Naive thymus-derived CD4-positive, alpha-beta T cell (primary cell): ENCODE measurements at regions of chr1 and their contacts with region 1.

Region 1: GRCh38 chr1:193059268-193060225 is at the starts of genes RO60 and UCHL5:
- DNase-seq: peak; percentile 79 to 96 (median 94)
- ATAC-seq: peak; percentile 98
- H3K4me3 ChIP-seq: peak within 1 kb of the TSS; percentile 96
- H3K4me3 Mint-ChIP-seq: peak within 1 kb of the TSS; percentile 93 to 100 (median 98)
- H3K27ac ChIP-seq: peak within 1 kb of the TSS; percentile 89
- H3K27ac Mint-ChIP-seq: peak within 1 kb of the TSS; percentile 97 to 100 (median 98)
- H3K4me1 ChIP-seq: peaks cover 22 to 30% of the 10 kb centered on the region in 2 donors
- H3K4me1 Mint-ChIP-seq: peaks cover 47 to 78% (median 72%) of the 10 kb centered on the region in 7 donors
- H3K27me3 ChIP-seq: no peaks in the 10 kb centered on the region
- H3K27me3 Mint-ChIP-seq: no peaks in the 10 kb centered on the region
- total RNA-seq, gene RO60: 49.8 to 75.1 (median 67.2) TPM
- total RNA-seq, gene UCHL5: 20.2 to 48.6 (median 31.8) TPM

Region 2: GRCh38 chr1:192580351-192580962 is 479.1 kb before region 1 on chr1:
- CTCF ChIA-PET with region 1: interaction called, 3 read pairs
- POLR2A ChIA-PET with region 1: no interaction called
- intact Hi-C with region 1: loop called in 1 of 2 experiments (anchors 1 kb)
- DNase-seq: peak in 3 of 9 donors; percentile 15 to 44 (median 38)
- ATAC-seq: peak; percentile 40
- H3K4me3 ChIP-seq: no peak overlapping the region
- H3K4me3 Mint-ChIP-seq: peak overlapping the region in 2 of 10 donors; percentile 31 to 40
- H3K27ac ChIP-seq: no peak overlapping the region
- H3K27ac Mint-ChIP-seq: peak overlapping the region in 2 of 9 donors; percentile 8 to 43
- H3K4me1 ChIP-seq: peaks cover 7 to 15% of the 10 kb centered on the region in 2 donors
- H3K4me1 Mint-ChIP-seq: peaks cover 8 to 44% (median 28%) of the 10 kb centered on the region in 7 donors
- H3K27me3 ChIP-seq: no peaks in the 10 kb centered on the region
- H3K27me3 Mint-ChIP-seq: peaks cover 0 to 2% (median 0%) of the 10 kb centered on the region in 5 donors

Region 3: DNA sequence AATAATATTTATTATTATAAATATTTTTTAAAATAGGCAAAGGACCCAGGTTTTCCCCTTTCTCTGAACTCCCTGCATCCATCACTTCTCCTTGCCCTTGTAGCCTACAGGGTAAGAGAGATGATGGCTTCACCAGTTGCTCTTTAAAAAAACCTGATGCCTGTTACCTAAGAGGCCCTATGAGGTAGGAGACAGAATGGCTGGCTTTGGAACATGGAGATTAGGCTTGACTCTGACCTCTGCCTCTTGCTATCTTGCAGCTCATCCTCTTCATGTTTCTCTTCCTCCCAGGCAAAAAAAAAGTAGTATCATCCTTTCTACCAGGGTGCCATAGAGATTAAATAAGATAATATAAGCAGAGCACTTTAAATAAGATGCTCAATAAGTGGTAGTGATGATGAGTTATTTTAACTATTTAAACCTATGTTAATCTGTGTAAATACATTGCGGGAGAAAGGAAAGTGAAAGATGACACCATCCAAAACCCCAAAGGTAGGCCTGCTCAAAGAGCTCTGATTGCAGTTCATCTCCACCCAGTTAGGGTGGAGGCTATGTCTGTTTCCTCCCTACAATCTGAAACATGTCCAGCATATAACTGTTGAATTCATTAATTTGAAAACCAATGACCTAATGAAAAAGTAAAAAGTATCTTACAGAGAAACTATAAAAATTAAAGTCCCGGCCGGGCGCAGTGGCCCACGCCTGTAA is 198.9 kb before region 1 on chr1:
- CTCF ChIA-PET with region 1: no interaction called
- POLR2A ChIA-PET with region 1: no interaction called
- intact Hi-C with region 1: no loop called
- DNase-seq: no peak
- ATAC-seq: no peak
- H3K4me3 ChIP-seq: no peak overlapping the region
- H3K4me3 Mint-ChIP-seq: no peak overlapping the region
- H3K27ac ChIP-seq: no peak overlapping the region
- H3K27ac Mint-ChIP-seq: peak overlapping the region in 1 of 9 donors; percentile 25
- H3K4me1 ChIP-seq: no peaks in the 10 kb centered on the region
- H3K4me1 Mint-ChIP-seq: peaks cover 0 to 3% (median 0%) of the 10 kb centered on the region in 7 donors
- H3K27me3 ChIP-seq: no peaks in the 10 kb centered on the region
- H3K27me3 Mint-ChIP-seq: no peaks in the 10 kb centered on the region

Region 4: DNA sequence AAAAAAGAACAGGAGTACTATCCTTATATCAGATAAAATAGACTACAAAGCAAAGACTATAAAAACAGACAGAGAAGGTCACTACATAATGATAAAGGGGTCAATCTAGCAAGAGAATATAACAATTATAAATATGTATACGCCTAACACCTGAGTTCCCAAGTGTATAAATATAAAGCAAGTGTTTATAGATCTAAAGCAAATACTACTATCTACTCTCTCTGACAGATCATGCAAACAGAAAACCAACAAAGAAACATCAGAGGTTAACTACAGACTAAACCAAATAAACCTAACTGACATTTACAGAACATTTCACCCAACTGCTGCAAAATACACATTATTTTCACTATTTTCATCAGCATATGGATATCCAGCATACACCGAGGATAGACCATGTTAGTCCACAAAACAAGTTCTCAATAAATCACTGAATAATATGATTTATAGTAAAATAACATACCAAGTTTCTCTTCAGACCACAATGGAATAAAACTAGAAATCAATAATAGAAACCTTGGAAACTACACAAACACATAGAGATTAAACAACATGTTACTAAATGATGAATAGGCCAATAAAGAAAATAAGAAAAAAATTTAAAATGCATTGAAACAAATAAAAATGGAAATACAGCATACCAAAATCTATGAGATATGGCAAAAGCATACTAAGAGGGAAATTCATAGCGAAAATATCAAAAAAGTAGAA is 23.1 kb before region 1 on chr1:
- CTCF ChIA-PET with region 1: no interaction called
- POLR2A ChIA-PET with region 1: no interaction called
- intact Hi-C with region 1: no loop called
- DNase-seq: no peak
- ATAC-seq: no peak
- H3K4me3 ChIP-seq: no peak overlapping the region
- H3K4me3 Mint-ChIP-seq: peak overlapping the region in 1 of 10 donors; percentile 22
- H3K27ac ChIP-seq: no peak overlapping the region
- H3K27ac Mint-ChIP-seq: peak overlapping the region in 1 of 9 donors; percentile 20
- H3K4me1 ChIP-seq: no peaks in the 10 kb centered on the region
- H3K4me1 Mint-ChIP-seq: peaks cover 17 to 63% (median 57%) of the 10 kb centered on the region in 7 donors
- H3K27me3 ChIP-seq: no peaks in the 10 kb centered on the region
- H3K27me3 Mint-ChIP-seq: no peaks in the 10 kb centered on the region

Region 5: GRCh38 chr1:193069748-193070385 is 10.3 kb after region 1 on chr1:
- CTCF ChIA-PET with region 1: no interaction called
- POLR2A ChIA-PET with region 1: interaction called, 6 read pairs
- intact Hi-C with region 1: loop called in 1 of 2 experiments (anchors 1 kb)
- DNase-seq: no peak
- ATAC-seq: peak; percentile 27
- H3K4me3 ChIP-seq: no peak overlapping the region
- H3K4me3 Mint-ChIP-seq: peak overlapping the region in 2 of 10 donors; percentile 3 to 30
- H3K27ac ChIP-seq: no peak overlapping the region
- H3K27ac Mint-ChIP-seq: peak overlapping the region in 8 of 9 donors; percentile 5 to 83 (median 72)
- H3K4me1 ChIP-seq: peaks cover 8 to 25% of the 10 kb centered on the region in 2 donors
- H3K4me1 Mint-ChIP-seq: peaks cover 31 to 69% (median 57%) of the 10 kb centered on the region in 7 donors
- H3K27me3 ChIP-seq: no peaks in the 10 kb centered on the region
- H3K27me3 Mint-ChIP-seq: no peaks in the 10 kb centered on the region

Region 6: DNA sequence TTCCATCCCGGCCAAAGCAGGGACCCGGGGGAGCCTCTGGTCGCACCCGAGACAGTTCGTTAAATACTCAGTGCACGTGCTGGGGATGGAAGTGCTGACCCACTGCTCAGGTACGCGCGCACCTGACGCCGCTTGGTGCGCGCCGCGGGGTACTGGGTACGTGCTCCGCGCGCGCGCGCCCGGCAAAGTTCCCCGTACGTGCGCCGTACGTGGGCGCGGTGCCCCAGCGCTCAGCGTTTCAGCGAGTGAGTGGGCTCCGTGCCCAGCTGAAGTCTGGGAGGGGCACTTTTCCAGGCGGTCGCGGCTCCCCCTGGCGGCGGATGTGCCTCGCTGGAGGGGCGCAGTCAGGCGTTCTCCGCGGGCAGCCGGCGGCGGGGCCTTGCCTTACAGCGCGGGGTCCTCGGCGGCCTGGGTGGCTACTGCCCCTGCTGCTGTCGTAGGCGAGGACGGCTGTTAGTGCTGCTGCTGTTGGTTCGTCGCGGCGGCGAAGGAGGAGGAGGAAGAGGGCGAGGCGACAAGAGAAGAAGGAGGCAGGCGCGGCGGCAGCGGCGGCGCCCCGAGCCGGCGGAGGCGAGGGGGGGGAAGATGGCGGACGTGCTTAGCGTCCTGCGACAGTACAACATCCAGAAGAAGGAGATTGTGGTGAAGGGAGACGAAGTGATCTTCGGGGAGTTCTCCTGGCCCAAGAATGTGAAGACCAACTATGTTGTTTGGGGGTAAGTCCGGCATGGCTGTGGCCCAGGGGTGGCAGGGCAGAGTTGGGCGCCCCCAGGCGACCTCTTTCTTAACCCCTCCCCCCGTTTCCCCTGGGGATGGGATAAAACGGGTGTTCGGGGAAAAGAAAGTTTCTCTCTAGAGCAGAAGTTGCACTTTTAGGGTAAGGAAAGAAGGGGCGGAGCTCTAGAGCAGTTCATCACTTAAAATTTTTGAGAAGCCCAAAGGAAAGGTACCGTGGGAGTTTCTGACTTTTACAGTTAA is 62.4 kb after region 1 on chr1 and contains the start of gene CDC73:
- CTCF ChIA-PET with region 1: interaction called, 18 read pairs
- POLR2A ChIA-PET with region 1: interaction called, 19 read pairs
- intact Hi-C with region 1: loop called (anchors 1 kb)
- DNase-seq: peak; percentile 97 to 100 (median 99)
- ATAC-seq: peak; percentile 96
- H3K4me3 ChIP-seq: peak within 1 kb of the TSS; percentile 85
- H3K4me3 Mint-ChIP-seq: peak within 1 kb of the TSS; percentile 88 to 99 (median 95)
- H3K27ac ChIP-seq: peak within 1 kb of the TSS; percentile 91
- H3K27ac Mint-ChIP-seq: peak within 1 kb of the TSS; percentile 92 to 98 (median 96)
- H3K4me1 ChIP-seq: peaks cover 21 to 25% of the 10 kb centered on the region in 2 donors
- H3K4me1 Mint-ChIP-seq: peaks cover 33 to 68% (median 47%) of the 10 kb centered on the region in 7 donors
- H3K27me3 ChIP-seq: no peaks in the 10 kb centered on the region
- H3K27me3 Mint-ChIP-seq: peaks cover 0 to 11% (median 0%) of the 10 kb centered on the region in 5 donors
- total RNA-seq, gene CDC73: 57.6 to 65.0 (median 58.8) TPM

Region 7: DNA sequence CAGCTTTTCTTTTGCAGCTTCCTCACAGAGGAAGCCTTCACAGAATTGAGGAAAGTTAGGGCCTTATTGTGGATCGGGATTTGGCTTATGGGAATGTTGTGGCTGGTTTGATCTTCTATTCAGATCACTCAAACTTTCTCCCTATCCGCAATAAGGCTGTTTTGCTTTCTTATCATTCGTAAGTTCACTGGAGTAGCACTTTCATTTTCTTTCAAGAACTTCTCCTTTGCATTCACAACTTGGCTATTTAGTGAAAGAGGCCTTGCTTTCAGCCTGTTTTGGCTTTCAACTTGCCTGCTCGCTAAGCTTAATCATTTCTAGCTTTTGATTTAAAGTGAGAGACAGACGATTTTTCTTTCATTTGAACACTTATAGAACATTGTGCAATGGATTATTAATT is 308.8 kb after region 1 on chr1:
- CTCF ChIA-PET with region 1: no interaction called
- POLR2A ChIA-PET with region 1: no interaction called
- intact Hi-C with region 1: no loop called
- DNase-seq: peak in 4 of 9 donors; percentile 5 to 20 (median 13)
- ATAC-seq: peak; percentile 42
- H3K4me3 ChIP-seq: peak overlapping the region; percentile 41
- H3K4me3 Mint-ChIP-seq: peak overlapping the region in 9 of 10 donors; percentile 60 to 85 (median 72)
- H3K27ac ChIP-seq: peak overlapping the region; percentile 63
- H3K27ac Mint-ChIP-seq: peak overlapping the region; percentile 68 to 96 (median 85)
- H3K4me1 ChIP-seq: peaks cover 0 to 4% of the 10 kb centered on the region in 2 donors
- H3K4me1 Mint-ChIP-seq: peaks cover 6 to 18% (median 7%) of the 10 kb centered on the region in 7 donors
- H3K27me3 ChIP-seq: no peaks in the 10 kb centered on the region
- H3K27me3 Mint-ChIP-seq: peaks cover 0 to 10% (median 2%) of the 10 kb centered on the region in 5 donors

Region 8: GRCh38 chr1:194052514-194053333 is 993.2 kb after region 1 on chr1:
- CTCF ChIA-PET with region 1: no interaction called
- POLR2A ChIA-PET with region 1: no interaction called
- intact Hi-C with region 1: loop called in 1 of 2 experiments (anchors 10 kb)
- DNase-seq: peak in 6 of 9 donors; percentile 21 to 54 (median 44)
- ATAC-seq: peak; percentile 56
- H3K4me3 ChIP-seq: peak overlapping the region; percentile 9
- H3K4me3 Mint-ChIP-seq: peak overlapping the region; percentile 41 to 83 (median 71)
- H3K27ac ChIP-seq: peak overlapping the region; percentile 63
- H3K27ac Mint-ChIP-seq: peak overlapping the region; percentile 93 to 98 (median 96)
- H3K4me1 ChIP-seq: peaks cover 7 to 61% of the 10 kb centered on the region in 2 donors
- H3K4me1 Mint-ChIP-seq: peaks cover 43 to 82% (median 69%) of the 10 kb centered on the region in 7 donors
- H3K27me3 ChIP-seq: no peaks in the 10 kb centered on the region
- H3K27me3 Mint-ChIP-seq: no peaks in the 10 kb centered on the region